ENCODE measurements at regions of chr2 and their contacts with region 1.

Region 1: DNA sequence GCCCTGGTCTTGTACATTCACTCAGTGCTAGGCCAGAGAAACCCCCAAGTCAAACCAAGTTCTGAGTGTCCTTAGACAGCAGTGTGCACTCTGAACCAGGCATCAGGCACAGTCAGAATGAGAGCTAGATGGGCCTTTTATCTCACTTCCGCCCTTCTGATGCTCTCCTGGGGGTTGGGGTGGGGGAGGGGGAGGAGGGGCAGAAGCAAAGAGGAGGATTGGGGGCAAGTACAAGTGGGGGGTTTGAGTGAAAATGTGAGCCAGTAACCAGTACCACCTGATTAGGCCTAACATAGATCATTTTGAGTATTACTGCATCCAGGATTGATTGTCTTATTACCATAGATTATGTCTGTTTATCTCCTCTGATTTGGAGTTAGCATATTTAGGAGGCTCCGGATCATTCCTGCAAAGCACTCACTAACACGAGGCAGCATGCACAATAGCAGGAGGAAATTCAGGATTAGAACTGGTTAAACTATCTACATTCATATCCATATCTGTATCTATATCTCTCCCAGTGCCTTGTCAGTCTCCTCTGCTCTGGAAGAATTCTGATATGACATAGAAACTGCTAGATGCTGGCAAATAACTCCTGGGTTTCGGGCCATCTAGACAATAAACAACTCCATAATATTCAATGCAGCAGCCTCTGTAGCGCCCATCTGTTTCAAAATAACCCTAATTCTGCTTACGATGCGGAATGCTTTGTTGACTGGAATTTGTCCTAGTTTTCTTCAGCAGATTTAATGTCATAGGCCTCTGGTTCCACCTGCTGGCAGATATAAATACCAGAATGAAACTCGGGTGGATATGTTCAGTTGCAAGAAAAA is 149.1 kb downstream of the RHBDD1 start:
- DNase-seq: peak in 4 of 14 experiments; percentile 19 to 55 (median 39)
- ATAC-seq: peak; percentile 73
- H3K4me3 ChIP-seq: no peak overlapping the region
- H3K4me3 Mint-ChIP-seq: no peak overlapping the region
- H3K27ac ChIP-seq: no peak overlapping the region
- H3K27ac Mint-ChIP-seq: peak overlapping the region; percentile 38
- H3K4me1 ChIP-seq: peaks cover 9% of the 10 kb centered on the region
- H3K4me1 Mint-ChIP-seq: peaks cover 27% of the 10 kb centered on the region
- H3K27me3 ChIP-seq: no peaks in the 10 kb centered on the region
- H3K27me3 Mint-ChIP-seq: no peaks in the 10 kb centered on the region
- CTCF ChIP-seq: peak; percentile 60

Region 2: DNA sequence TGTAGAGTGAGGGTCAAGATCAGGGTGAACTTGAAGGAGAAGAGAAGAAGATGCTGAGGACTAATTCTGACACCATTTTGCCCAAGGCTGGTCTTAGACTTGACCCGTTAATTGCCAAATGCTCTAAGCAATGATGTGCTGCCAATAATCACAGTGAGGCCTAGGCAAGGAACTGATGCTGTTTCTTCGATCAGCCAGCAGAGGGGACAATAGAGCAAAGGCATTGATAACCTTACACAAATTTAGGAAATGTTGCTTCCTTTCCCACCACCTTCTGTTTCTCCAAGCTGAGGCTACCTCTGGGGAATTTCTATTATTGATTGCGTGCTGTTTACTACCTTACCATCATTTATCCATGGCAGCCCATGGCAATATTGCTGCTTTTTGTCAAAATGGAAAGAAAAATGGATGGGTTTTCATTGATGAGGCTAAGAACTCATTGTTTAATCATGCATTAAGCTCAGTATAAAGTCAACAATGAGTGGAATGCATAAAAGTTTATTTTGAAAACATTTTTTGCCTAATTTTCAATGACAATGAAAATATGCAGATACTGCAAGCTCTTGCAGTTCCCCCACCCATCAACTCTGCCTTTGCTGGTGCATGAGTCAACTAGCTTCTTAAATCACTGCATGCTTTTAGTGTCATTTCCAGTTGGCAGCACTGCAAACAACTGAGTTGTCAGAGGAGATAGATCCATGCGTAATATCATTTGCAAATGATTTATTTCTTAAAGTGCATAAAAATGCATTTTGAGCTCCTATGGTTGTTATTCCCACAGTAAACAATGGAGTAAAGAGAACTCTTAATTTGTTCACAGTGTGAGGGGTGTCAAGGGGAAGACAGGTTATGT is 1701.9 kb before region 1 on chr2:
- CTCF ChIA-PET with region 1: no interaction called
- POLR2A ChIA-PET with region 1: no interaction called
- intact Hi-C with region 1: loop called in 1 of 2 experiments (anchors 10 kb)
- DNase-seq: peak in 6 of 14 experiments; percentile 2 to 51 (median 30)
- ATAC-seq: peak; percentile 43
- H3K4me3 ChIP-seq: no peak overlapping the region
- H3K4me3 Mint-ChIP-seq: no peak overlapping the region
- H3K27ac ChIP-seq: no peak overlapping the region
- H3K27ac Mint-ChIP-seq: no peak overlapping the region
- H3K4me1 ChIP-seq: no peaks in the 10 kb centered on the region
- H3K4me1 Mint-ChIP-seq: no peaks in the 10 kb centered on the region
- H3K27me3 ChIP-seq: no peaks in the 10 kb centered on the region
- H3K27me3 Mint-ChIP-seq: no peaks in the 10 kb centered on the region
- CTCF ChIP-seq: peak; percentile 82

Region 3: DNA sequence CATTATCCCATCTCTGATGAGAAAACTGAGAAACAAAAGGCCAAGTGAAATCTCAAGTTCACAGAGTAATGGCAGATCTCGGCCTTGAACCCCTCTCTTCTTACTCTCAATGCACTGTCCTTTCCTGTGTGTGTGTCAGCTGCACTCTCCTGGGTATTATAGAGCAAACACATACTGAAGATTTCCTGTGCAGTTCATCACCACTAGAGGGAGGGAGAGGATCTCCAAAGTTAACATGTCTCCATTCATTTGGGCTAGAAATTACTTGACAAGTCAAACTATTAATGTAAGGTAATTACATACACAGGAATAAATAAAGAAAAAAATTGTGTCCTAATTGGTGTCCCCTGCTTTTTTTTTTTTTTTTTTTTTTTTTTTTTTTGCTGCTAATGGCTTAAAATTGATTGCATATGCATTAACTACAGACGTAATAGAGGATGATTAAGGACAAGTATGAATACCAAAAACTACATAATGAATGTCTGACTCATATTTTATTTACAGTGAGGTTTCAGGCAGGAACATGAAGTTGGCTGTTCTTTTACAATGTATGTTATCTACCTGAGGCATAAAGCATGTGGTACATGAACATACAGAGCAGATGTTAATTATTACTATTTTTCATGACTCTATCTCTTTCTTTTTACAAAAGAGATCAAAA is 1316.2 kb before region 1 on chr2:
- CTCF ChIA-PET with region 1: no interaction called
- POLR2A ChIA-PET with region 1: no interaction called
- intact Hi-C with region 1: loop called (anchors 1 kb)
- DNase-seq: peak in 5 of 14 experiments; percentile 3 to 68 (median 51)
- ATAC-seq: peak; percentile 81
- H3K4me3 ChIP-seq: no peak overlapping the region
- H3K4me3 Mint-ChIP-seq: no peak overlapping the region
- H3K27ac ChIP-seq: no peak overlapping the region
- H3K27ac Mint-ChIP-seq: no peak overlapping the region
- H3K4me1 ChIP-seq: no peaks in the 10 kb centered on the region
- H3K4me1 Mint-ChIP-seq: no peaks in the 10 kb centered on the region
- H3K27me3 ChIP-seq: no peaks in the 10 kb centered on the region
- H3K27me3 Mint-ChIP-seq: peaks cover 16% of the 10 kb centered on the region
- CTCF ChIP-seq: peak; percentile 71

Region 4: DNA sequence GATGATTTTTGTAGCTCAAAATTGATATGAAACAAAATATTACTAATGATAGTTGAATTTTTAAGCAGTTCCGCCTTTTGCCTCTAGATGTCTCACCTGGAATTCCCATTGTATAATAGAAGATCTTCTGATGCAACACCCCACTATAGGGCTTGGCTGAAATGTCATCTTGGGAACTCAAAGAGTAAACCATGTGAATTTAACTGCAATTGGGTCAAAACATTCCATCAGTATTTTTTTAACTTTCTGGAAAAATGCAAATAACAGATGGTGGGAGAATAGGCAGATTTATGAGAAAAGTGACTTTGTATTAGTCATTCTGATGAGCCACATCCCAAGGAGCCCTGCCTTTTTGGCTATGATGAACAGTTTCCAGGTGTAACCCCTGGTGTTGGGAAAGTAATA is 1095.5 kb before region 1 on chr2:
- CTCF ChIA-PET with region 1: no interaction called
- POLR2A ChIA-PET with region 1: no interaction called
- intact Hi-C with region 1: loop called (anchors 2 kb)
- DNase-seq: peak in 3 of 14 experiments; percentile 29 to 31 (median 29)
- ATAC-seq: no peak
- H3K4me3 ChIP-seq: no peak overlapping the region
- H3K4me3 Mint-ChIP-seq: no peak overlapping the region
- H3K27ac ChIP-seq: no peak overlapping the region
- H3K27ac Mint-ChIP-seq: no peak overlapping the region
- H3K4me1 ChIP-seq: no peaks in the 10 kb centered on the region
- H3K4me1 Mint-ChIP-seq: no peaks in the 10 kb centered on the region
- H3K27me3 ChIP-seq: peaks cover 0 to 3% of the 10 kb centered on the region in 2 experiments
- H3K27me3 Mint-ChIP-seq: peaks cover 8% of the 10 kb centered on the region
- CTCF ChIP-seq: peak; percentile 70

Region 5: GRCh38 chr2:226478109-226478809 is 506.7 kb before region 1 on chr2:
- CTCF ChIA-PET with region 1: no interaction called
- POLR2A ChIA-PET with region 1: no interaction called
- intact Hi-C with region 1: no loop called
- DNase-seq: no peak
- ATAC-seq: no peak
- H3K4me3 ChIP-seq: no peak overlapping the region
- H3K4me3 Mint-ChIP-seq: no peak overlapping the region
- H3K27ac ChIP-seq: no peak overlapping the region
- H3K27ac Mint-ChIP-seq: no peak overlapping the region
- H3K4me1 ChIP-seq: no peaks in the 10 kb centered on the region
- H3K4me1 Mint-ChIP-seq: no peaks in the 10 kb centered on the region
- H3K27me3 ChIP-seq: peaks cover 3 to 4% of the 10 kb centered on the region in 2 experiments
- H3K27me3 Mint-ChIP-seq: peaks cover 6% of the 10 kb centered on the region
- CTCF ChIP-seq: no peak

Region 6: DNA sequence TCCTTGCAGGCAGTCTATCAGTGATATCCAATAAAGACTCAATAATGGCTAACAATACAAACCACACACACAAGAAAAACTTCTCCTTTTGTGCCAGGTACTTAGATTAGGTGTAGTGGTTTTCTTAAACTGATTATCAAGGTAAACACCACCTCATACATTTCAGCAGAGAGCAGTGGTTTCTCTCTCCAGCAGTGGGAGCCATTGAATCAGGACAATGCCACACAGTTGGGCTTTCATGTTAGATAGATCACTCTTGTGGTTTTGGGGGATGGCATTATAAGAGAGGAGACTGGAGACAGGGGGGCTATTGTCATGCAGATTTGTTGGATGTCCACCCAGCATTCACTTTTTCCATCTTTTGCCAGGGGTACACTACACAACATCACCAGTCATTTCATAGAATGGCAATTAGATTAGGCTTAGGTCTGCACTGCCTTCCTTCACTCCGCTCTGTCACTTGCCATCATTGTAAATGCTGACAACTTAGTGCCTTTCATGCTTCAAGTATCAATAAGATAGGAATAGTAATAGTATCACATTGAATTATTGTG is 171.7 kb before region 1 on chr2:
- CTCF ChIA-PET with region 1: no interaction called
- POLR2A ChIA-PET with region 1: no interaction called
- intact Hi-C with region 1: loop called (anchors 1 to 10 kb)
- DNase-seq: peak in 3 of 14 experiments; percentile 5 to 19 (median 18)
- ATAC-seq: no peak
- H3K4me3 ChIP-seq: no peak overlapping the region
- H3K4me3 Mint-ChIP-seq: no peak overlapping the region
- H3K27ac ChIP-seq: no peak overlapping the region
- H3K27ac Mint-ChIP-seq: no peak overlapping the region
- H3K4me1 ChIP-seq: no peaks in the 10 kb centered on the region
- H3K4me1 Mint-ChIP-seq: no peaks in the 10 kb centered on the region
- H3K27me3 ChIP-seq: peaks cover 0 to 29% of the 10 kb centered on the region in 2 experiments
- H3K27me3 Mint-ChIP-seq: peaks cover 41% of the 10 kb centered on the region
- CTCF ChIP-seq: no peak

Region 7: DNA sequence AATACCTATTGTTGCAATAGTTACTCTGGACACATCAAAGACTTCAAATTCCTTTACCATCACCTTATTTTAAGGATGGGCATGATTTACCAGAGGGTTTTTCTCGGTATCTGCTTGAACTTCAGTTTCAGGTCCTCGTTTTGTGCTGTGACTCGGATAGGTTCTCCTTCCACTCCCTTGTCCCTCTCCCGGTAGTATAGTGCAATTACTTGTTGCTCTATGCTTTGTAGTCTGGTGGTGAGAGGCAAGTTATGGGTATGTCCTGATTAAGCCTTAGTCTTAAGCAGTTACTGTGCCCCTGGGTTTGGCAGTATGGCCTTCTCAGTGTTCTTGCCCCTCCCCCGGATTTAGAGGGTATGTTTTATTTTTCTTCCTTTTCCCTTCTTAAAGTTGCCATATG is 52.5 kb before region 1 on chr2:
- CTCF ChIA-PET with region 1: no interaction called
- POLR2A ChIA-PET with region 1: no interaction called
- intact Hi-C with region 1: no loop called
- DNase-seq: no peak
- ATAC-seq: no peak
- H3K4me3 ChIP-seq: no peak overlapping the region
- H3K4me3 Mint-ChIP-seq: no peak overlapping the region
- H3K27ac ChIP-seq: no peak overlapping the region
- H3K27ac Mint-ChIP-seq: no peak overlapping the region
- H3K4me1 ChIP-seq: no peaks in the 10 kb centered on the region
- H3K4me1 Mint-ChIP-seq: no peaks in the 10 kb centered on the region
- H3K27me3 ChIP-seq: no peaks in the 10 kb centered on the region
- H3K27me3 Mint-ChIP-seq: no peaks in the 10 kb centered on the region
- CTCF ChIP-seq: no peak

Measured in CD4-positive, alpha-beta T cell (primary cell).